Activated naive CD4-positive, alpha-beta T cell treated with anti-CD3 and anti-CD28 coated beads for 36 hours (primary cell): ENCODE measurements at regions of chr15 and their contacts with region 1.

Region 1: DNA sequence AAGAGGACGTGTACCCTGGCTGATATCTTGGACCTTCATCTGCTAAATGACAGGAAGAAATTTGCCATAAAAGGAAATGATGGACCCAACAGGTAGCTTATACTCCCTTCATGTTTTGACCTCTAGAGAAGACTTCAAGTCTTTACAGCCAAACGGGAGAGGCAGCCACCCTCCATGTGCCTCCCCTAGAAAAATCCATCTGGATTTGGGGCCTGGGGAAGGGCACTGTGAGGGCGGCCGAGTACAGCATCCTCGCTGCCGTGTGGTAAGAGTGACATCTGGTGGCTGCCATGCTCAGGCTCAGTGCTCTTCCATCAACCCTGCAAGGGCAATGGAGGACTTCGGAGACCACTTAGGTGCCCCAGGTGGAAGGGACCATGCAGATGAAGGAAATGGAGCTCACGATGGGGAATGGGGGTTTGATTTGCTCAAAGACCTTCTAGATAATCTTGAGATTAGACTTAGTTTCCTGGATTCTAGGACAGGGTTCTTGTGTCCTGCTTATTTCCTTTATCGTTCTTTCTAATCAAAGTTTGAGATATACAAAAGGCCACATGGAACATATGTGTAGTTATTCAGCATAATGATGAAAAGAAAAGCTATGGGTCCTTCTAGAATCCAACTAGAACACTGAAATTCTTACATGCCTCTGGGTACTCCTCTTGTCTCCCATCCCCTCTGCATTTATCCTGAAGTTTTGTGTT is 44.4 kb downstream of the AQP9 start:
- DNase-seq: peak; percentile 55
- H3K4me3 Mint-ChIP-seq: no peak overlapping the region
- H3K27ac Mint-ChIP-seq: no peak overlapping the region
- H3K4me1 Mint-ChIP-seq: peaks cover 11% of the 10 kb centered on the region
- H3K27me3 Mint-ChIP-seq: peaks cover 18% of the 10 kb centered on the region

Region 2: GRCh38 chr15:57323806-57324589 is 858.6 kb before region 1 on chr15:
- CTCF ChIA-PET with region 1: no interaction called
- intact Hi-C with region 1: no loop called
- DNase-seq: peak; percentile 31
- H3K4me3 Mint-ChIP-seq: no peak overlapping the region
- H3K27ac Mint-ChIP-seq: no peak overlapping the region
- H3K4me1 Mint-ChIP-seq: peaks cover 5% of the 10 kb centered on the region
- H3K27me3 Mint-ChIP-seq: no peaks in the 10 kb centered on the region

Region 3: GRCh38 chr15:57751177-57751800 is 431.3 kb before region 1 on chr15:
- CTCF ChIA-PET with region 1: no interaction called
- intact Hi-C with region 1: loop called (anchors 10 kb)
- DNase-seq: peak; percentile 15
- H3K4me3 Mint-ChIP-seq: no peak overlapping the region
- H3K27ac Mint-ChIP-seq: no peak overlapping the region
- H3K4me1 Mint-ChIP-seq: peaks cover 5% of the 10 kb centered on the region
- H3K27me3 Mint-ChIP-seq: no peaks in the 10 kb centered on the region

Region 4: GRCh38 chr15:57827021-57827420 is 355.6 kb before region 1 on chr15:
- CTCF ChIA-PET with region 1: no interaction called
- intact Hi-C with region 1: no loop called
- DNase-seq: no peak
- H3K4me3 Mint-ChIP-seq: no peak overlapping the region
- H3K27ac Mint-ChIP-seq: no peak overlapping the region
- H3K4me1 Mint-ChIP-seq: no peaks in the 10 kb centered on the region
- H3K27me3 Mint-ChIP-seq: peaks cover 23% of the 10 kb centered on the region

Region 5: DNA sequence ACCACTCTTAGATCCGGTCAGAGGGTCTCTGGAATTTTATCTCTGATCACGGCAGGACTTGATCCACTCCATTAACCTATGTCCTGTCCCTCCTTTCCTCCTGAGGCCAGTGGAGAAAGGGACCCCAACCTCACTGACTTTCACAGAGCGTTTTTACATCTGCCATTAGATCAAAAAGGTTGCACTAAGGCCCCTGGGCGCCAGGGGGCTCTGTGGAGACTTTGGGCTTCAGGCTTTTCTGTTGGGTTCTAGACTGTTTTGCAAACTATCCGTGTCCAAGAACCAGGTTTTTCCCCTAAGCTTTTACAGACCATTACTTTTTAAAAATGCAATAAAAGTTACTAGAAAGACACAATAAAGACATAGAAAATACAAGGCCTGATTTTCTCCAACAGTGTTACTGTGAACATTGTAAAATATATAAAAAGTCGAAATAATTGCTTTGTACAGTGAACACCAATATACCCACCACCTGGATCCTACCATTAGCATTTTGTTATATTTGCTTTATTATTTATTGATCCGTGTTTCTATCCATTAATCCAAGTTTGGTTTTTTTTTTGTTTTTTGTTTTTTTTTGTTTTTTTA is 316.4 kb before region 1 on chr15:
- CTCF ChIA-PET with region 1: interaction called, 3 read pairs
- intact Hi-C with region 1: loop called (anchors 1 kb)
- DNase-seq: peak; percentile 74
- H3K4me3 Mint-ChIP-seq: no peak overlapping the region
- H3K27ac Mint-ChIP-seq: no peak overlapping the region
- H3K4me1 Mint-ChIP-seq: no peaks in the 10 kb centered on the region
- H3K27me3 Mint-ChIP-seq: peaks cover 31% of the 10 kb centered on the region

Region 6: GRCh38 chr15:58019503-58020376 is 162.9 kb before region 1 on chr15:
- CTCF ChIA-PET with region 1: no interaction called
- intact Hi-C with region 1: no loop called
- DNase-seq: no peak
- H3K4me3 Mint-ChIP-seq: no peak overlapping the region
- H3K27ac Mint-ChIP-seq: no peak overlapping the region
- H3K4me1 Mint-ChIP-seq: no peaks in the 10 kb centered on the region
- H3K27me3 Mint-ChIP-seq: peaks cover 21% of the 10 kb centered on the region

Region 7: DNA sequence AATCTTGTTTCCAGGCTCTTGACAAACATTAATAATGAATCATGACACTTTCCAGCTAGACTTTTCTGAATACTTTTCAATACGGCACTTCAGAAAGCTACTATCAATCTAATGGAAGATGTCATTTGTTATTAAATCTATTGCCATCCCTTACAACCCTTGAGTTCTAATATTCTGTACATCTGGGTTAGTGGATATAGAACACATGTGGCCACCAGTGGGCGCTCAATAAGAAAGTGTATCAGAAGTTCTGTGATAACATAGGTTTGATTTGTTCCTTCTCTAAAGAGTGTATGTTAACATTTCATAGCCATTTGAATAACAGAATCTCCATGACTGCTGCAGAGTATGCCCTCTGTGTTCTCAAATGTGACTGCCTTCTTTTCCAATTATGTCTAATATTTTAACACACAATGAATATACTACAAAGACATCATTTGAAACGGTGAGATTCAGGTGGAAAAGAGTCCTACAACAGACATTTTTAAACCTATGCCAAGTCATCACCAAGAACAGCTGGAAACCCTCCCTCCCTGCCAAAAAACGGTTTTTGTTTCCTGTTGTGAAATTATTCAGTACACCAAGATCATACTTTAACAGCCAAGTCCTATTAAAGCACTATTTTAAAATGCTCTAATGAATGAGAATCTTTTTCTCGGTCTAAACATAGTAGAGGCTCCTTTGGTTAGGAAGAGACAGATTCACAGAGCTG is 139.3 kb before region 1 on chr15:
- CTCF ChIA-PET with region 1: interaction called, 5 read pairs
- intact Hi-C with region 1: loop called (anchors 1 kb)
- DNase-seq: peak; percentile 67
- H3K4me3 Mint-ChIP-seq: no peak overlapping the region
- H3K27ac Mint-ChIP-seq: no peak overlapping the region
- H3K4me1 Mint-ChIP-seq: no peaks in the 10 kb centered on the region
- H3K27me3 Mint-ChIP-seq: peaks cover 40% of the 10 kb centered on the region

Region 8: DNA sequence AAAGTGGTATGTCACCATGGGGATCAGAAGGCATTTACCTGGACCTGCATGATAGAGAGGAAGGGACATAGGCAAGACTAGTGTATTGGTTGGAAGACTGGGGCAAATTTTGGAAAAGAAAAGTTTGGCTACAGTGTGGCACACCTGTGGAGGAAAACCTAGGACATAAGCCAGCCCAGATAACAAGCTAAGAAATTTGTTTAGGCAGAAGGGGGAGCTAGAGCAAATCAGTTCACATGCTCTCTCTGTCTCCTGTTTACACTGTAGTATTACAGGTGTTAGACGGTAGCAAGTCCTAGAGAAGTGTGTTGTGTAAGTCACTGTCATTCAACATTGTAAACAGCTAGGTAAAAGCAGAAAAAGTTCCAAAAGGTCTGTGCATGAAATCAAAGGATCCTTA is 105.2 kb before region 1 on chr15:
- CTCF ChIA-PET with region 1: interaction called, 10 read pairs
- intact Hi-C with region 1: loop called (anchors 1 kb)
- DNase-seq: no peak
- H3K4me3 Mint-ChIP-seq: no peak overlapping the region
- H3K27ac Mint-ChIP-seq: no peak overlapping the region
- H3K4me1 Mint-ChIP-seq: no peaks in the 10 kb centered on the region
- H3K27me3 Mint-ChIP-seq: peaks cover 14% of the 10 kb centered on the region

Region 9: DNA sequence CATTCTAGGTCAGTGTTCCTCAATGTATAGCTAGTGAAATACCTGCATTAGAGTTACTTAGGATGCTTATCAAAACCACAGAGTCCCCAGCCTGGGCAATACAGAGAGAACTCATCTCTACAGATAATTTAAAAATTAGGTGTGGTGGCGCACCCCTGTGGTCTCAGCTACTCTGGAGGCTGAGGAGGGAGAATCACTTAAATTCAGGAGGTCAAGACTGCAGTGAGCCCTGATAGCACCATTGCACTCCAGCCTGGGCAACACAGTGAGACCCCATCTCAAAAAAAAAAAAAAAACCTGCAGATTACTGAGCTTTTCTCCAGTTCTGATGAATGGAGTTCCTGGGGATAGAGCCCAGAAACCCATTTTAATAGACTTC is 578.4 kb after region 1 on chr15:
- CTCF ChIA-PET with region 1: no interaction called
- intact Hi-C with region 1: loop called (anchors 1 kb)
- DNase-seq: peak; percentile 62
- H3K4me3 Mint-ChIP-seq: no peak overlapping the region
- H3K27ac Mint-ChIP-seq: no peak overlapping the region
- H3K4me1 Mint-ChIP-seq: no peaks in the 10 kb centered on the region
- H3K27me3 Mint-ChIP-seq: no peaks in the 10 kb centered on the region